ENCODE measurements at regions of chr1 and their contacts with region 1.

Region 1: DNA sequence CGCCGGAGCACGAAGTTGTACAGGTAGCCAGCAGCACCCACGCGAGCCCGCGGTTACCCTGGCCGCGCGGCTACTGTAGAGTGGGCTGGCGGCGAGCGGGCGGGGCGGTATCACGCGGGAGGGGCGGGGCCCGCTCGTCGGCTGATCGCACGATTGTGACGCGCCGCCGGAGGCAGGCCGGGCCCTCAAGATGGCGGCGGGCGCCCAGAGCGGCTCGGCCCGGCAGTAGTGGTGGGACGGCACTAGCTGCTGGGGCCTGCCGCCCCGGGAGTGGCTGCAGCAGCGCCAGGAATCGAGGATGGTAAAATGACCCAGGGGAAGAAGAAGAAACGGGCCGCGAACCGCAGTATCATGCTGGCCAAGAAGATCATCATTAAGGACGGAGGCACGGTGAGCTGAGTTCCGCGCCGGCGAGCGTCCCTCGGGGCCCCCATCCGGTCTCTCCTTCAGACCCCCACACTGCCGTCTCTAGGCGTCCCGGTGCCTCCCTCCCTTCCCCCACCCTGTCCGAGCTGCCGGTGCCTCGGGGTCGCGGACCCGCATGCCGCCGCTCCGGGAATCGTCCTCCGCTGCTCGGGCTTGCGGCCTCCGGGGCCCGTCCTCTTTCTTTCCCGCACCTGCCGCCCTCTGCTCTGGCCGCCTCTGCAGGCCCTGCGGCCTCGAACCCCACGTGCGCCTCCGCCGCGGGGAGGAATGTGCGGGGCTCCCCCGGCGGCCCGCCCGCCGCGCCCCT is 68.3 kb downstream of the SLC35A3 start:
- DNase-seq: peak; percentile 96
- H3K4me3 ChIP-seq: peak overlapping the region; percentile 80 to 98 (median 82)
- H3K27ac ChIP-seq: peak overlapping the region; percentile 97 to 100 (median 98)
- H3K4me1 ChIP-seq: peaks cover 18 to 60% (median 52%) of the 10 kb centered on the region in 4 donors
- H3K27me3 ChIP-seq: no peaks in the 10 kb centered on the region
- CTCF ChIP-seq: no peak
- EP300 ChIP-seq: no peak
- POLR2A ChIP-seq: peak; percentile 81

Region 2: DNA sequence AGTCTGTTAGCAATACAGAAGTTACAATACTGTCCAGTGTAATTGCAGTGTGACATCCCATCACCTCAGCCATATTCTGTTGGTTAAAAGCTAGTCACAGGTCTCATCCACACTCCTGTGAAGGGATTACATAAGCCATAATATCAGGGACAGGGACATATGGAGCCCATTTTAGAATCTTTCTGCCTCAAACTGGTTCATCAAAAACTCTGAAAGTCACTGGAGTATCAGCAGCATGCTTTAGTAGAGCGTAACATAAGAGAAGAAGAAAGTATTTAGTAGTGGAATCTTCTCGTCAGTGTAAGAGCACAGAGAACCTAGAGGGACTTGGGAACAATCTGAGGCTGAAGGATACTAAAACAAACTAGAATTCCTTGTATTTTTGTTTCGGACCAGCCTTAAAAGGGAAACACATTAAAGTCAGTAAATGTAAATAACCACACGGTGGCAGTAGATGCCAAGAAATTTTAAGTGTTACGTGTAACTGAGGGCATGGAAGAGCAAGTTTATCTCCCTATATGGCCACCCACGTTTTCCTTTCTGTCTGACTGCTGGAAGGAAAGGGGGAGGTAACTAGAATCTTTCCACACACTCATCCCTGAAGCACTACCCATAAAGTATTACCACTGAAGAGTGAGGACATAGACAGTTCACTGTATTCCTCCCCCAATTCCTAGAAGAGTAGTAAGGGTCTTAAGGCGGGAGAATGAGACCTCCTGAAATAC is 229.5 kb before region 1 on chr1:
- intact Hi-C with region 1: loop called (anchors 10 kb)
- DNase-seq: no peak
- H3K4me3 ChIP-seq: peak overlapping the region in 3 of 4 donors; percentile 8 to 28 (median 24)
- H3K27ac ChIP-seq: peak overlapping the region; percentile 74 to 82 (median 78)
- H3K4me1 ChIP-seq: peaks cover 6 to 13% (median 12%) of the 10 kb centered on the region in 4 donors
- H3K27me3 ChIP-seq: no peaks in the 10 kb centered on the region
- CTCF ChIP-seq: peak; percentile 68 to 72 (median 68)
- EP300 ChIP-seq: no peak
- POLR2A ChIP-seq: no peak

Measured in esophagus muscularis mucosa (tissue), 4 donors.